Activated T-helper 2 cell treated with anti-CD3 and anti-CD28 coated beads, Interferon-gamma antibody, Interleukin-2, Interleukin-4, amounts not matched to agents 10 μg/mL and 5 μg/mL and 100 μg/mL, durations not matched to agents 14 hours and 24 hours and 36 hours (primary cell): ENCODE measurements at regions of chr17 and their contacts with region 1.

Region 1: DNA sequence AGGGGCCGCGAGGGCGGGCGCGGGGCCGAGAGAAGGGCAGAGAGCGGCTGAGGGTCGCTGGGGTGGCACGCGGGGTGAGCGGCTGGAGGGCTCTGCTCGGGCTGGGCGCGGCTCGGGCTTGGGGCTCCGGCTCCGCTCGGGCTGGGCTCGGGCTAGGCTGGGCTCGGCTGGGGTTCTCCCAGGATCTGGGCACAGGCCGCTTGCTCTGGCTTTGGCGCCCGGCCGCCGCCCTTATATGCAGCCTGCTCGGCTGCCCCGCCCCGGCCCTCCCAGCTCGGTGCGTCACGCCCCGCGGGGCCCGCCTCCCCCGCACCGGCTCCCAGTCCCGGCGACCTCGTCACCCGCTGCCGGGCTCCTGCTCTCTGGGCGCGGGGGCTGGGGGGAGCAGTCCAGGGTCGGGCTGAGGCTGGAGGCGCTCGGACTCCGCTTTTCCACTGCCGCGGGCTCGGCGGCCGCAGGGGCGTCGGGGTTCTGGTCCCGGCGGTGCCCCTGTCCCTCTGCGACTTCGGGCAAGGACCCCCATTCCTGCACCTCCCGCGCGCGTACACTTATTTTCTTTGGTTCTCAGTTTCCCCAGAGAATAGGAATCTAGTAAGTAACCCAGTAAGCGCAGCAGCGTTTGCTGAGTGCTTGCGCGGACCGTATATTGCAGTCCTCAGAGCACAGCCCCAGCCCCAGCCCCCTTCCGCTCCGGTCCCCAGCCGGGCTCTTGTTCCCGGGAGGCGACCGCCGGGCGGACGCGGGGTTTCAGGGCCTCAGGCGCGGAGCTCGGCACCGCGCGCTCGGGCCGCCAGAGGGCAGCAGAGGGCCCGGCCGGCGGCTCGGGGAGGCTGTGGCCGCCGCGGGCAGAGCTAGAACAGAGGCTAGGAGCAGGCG is at the start of gene RASD1:
- DNase-seq: peak; percentile 76
- H3K4me3 Mint-ChIP-seq: peak within 1 kb of the TSS; percentile 79
- H3K27ac Mint-ChIP-seq: peak within 1 kb of the TSS; percentile 25
- H3K4me1 Mint-ChIP-seq: peaks cover 8% of the 10 kb centered on the region
- H3K27me3 Mint-ChIP-seq: peaks cover 17% of the 10 kb centered on the region
- total RNA-seq, gene RASD1: 4.6 and 4.9 TPM in 2 replicates

Region 2: GRCh38 chr17:17356149-17356930 is 140.1 kb before region 1 on chr17:
- intact Hi-C with region 1: loop called (anchors 1 kb)
- DNase-seq: peak; percentile 52
- H3K4me3 Mint-ChIP-seq: no peak overlapping the region
- H3K27ac Mint-ChIP-seq: no peak overlapping the region
- H3K4me1 Mint-ChIP-seq: no peaks in the 10 kb centered on the region
- H3K27me3 Mint-ChIP-seq: peaks cover 21% of the 10 kb centered on the region

Region 3: DNA sequence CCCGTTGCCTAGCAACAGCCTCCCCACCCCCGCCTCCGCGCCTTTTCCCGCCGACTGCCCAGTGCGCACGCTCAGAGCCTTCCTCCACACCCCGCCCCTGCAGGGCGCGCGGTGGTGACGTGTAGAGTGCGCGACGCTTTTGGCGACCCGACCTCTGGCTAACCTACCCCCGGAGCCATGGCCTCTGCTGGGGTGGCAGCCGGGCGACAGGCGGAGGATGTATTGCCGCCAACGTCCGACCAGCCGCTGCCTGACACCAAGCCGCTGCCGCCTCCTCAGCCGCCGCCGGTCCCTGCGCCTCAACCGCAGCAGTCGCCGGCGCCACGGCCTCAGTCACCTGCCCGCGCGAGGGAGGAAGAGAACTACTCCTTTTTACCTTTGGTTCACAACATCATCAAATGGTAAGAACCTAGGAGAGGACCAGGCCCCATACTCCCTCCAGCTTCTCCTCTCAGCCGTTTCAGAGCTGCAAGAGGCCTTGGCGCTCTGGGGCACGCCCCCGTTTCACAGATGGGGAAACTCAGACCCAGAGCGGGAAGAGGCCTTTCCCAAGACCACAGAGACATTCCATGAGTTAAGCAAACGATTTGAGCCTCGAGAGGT is 19.5 kb before region 1 on chr17 and contains the start of gene MED9:
- intact Hi-C with region 1: loop called (anchors 2 kb)
- DNase-seq: peak; percentile 90
- H3K4me3 Mint-ChIP-seq: peak within 1 kb of the TSS; percentile 90
- H3K27ac Mint-ChIP-seq: peak within 1 kb of the TSS; percentile 79
- H3K4me1 Mint-ChIP-seq: peaks cover 32% of the 10 kb centered on the region
- H3K27me3 Mint-ChIP-seq: peaks cover 8% of the 10 kb centered on the region
- total RNA-seq, gene MED9: 12.6 and 13.1 TPM in 2 replicates

Region 4: GRCh38 chr17:17484451-17484899 is 12.0 kb before region 1 on chr17:
- intact Hi-C with region 1: loop called (anchors 1 kb)
- DNase-seq: no peak
- H3K4me3 Mint-ChIP-seq: no peak overlapping the region
- H3K27ac Mint-ChIP-seq: peak overlapping the region; percentile 85
- H3K4me1 Mint-ChIP-seq: peaks cover 33% of the 10 kb centered on the region
- H3K27me3 Mint-ChIP-seq: no peaks in the 10 kb centered on the region

Region 5: DNA sequence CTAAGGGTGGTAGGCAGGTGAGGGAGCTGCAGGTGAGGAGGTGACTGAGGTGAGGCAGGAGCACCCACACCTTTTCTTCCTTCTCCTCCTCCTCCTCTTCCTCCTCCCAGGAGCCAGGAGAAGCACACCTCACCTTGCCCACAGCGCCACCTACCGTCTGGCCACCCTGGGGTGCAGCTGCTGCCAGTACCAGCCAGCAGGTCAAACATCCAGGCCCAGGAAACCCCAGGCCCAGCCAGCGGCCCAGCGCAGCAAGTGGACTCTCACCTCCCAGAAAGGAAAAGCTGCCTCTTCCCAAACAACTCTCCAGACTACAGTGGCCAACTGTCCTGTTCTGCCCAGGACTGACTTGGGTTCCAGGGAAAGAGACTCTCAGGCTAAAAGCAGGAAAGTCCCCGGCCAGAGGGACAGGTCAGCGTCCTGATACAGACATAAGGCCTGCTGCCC is 72.3 kb after region 1 on chr17:
- intact Hi-C with region 1: loop called (anchors 2 kb)
- DNase-seq: peak; percentile 47
- H3K4me3 Mint-ChIP-seq: no peak overlapping the region
- H3K27ac Mint-ChIP-seq: no peak overlapping the region
- H3K4me1 Mint-ChIP-seq: no peaks in the 10 kb centered on the region
- H3K27me3 Mint-ChIP-seq: no peaks in the 10 kb centered on the region

Region 6: GRCh38 chr17:17641621-17642409 is 145.4 kb after region 1 on chr17:
- intact Hi-C with region 1: loop called (anchors 2 kb)
- DNase-seq: peak; percentile 67
- H3K4me3 Mint-ChIP-seq: no peak overlapping the region
- H3K27ac Mint-ChIP-seq: no peak overlapping the region
- H3K4me1 Mint-ChIP-seq: no peaks in the 10 kb centered on the region
- H3K27me3 Mint-ChIP-seq: no peaks in the 10 kb centered on the region

Region 7: DNA sequence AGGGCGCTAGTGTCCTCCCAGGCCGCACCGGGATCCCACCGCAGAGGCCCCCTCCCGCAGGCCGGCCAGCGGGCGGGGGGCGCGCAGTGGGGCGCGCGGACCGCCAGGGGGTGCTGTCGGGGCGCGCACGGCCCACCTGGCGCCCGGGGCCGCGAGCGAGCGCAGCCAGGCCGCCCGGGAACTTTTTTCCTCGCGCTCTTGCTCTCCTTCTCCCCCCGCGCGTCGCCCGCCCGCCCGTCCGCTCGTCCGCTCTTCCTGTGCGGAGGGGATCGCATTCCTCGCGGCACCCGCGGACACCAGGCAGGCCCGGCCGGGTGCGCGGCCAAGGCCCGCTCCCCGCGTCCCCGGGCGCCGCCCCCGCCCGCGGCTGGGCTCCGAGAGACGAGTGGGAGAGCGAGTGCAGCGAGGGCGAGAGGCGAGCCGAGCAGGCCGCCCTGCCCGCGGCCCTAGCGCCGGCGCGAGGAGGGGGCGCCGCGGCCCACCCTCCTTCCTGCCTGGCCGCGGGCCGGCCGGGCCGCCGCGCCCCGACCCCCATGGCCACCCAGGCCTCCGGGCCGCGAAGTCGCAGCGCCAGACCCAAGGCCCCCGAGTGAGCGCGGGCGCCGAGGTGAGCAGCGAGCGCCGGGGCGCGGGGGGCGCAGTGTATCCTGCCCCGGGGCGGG is 184.9 kb after region 1 on chr17 and contains the start of gene RAI1:
- intact Hi-C with region 1: no loop called
- DNase-seq: peak; percentile 68
- H3K4me3 Mint-ChIP-seq: peak within 1 kb of the TSS; percentile 85
- H3K27ac Mint-ChIP-seq: peak within 1 kb of the TSS; percentile 85
- H3K4me1 Mint-ChIP-seq: peaks cover 28% of the 10 kb centered on the region
- H3K27me3 Mint-ChIP-seq: peaks cover 11% of the 10 kb centered on the region
- total RNA-seq, gene RAI1: 33.5 and 36.5 TPM in 2 replicates